ENCODE measurements at regions of chr1 and their contacts with region 1.

Region 1: GRCh38 chr1:198465201-198466144 is 75.0 kb downstream of the ATP6V1G3 start:
- DNase-seq: peak; percentile 41
- H3K4me3 ChIP-seq: no peak overlapping the region
- H3K27ac ChIP-seq: no peak overlapping the region
- H3K27me3 ChIP-seq: no peaks in the 10 kb centered on the region
- CTCF ChIP-seq: peak; percentile 65

Region 2: GRCh38 chr1:198681831-198682759 is 216.6 kb after region 1 on chr1:
- CTCF ChIA-PET with region 1: interaction called, 34 read pairs
- POLR2A ChIA-PET with region 1: no interaction called
- DNase-seq: peak; percentile 70
- H3K4me3 ChIP-seq: peak overlapping the region; percentile 30; the same call in 1 of the 2 replicates
- H3K27ac ChIP-seq: peak overlapping the region; percentile 58
- H3K27me3 ChIP-seq: no peaks in the 10 kb centered on the region
- CTCF ChIP-seq: no peak